ENCODE measurements at regions of chr2 and their contacts with region 1.

Region 1: DNA sequence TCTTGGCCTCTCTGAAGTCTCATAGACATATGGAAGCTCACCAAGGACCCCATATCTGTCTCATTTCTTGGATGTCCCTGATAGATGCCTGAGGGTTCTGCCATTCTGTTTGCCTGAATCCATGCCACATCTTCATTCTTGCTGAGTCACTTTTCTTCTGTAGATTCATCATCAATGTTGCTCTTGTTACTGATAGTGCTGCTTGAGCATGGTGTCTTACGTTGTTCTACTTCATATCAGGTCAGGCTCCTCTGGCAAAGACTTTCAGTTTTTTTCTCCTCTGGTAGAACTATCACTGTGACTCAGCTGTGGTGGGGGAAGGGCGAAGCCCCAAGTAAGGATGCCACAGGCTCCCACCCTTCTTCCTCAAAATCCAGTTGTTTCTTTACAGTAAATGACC is 885.2 kb downstream of the DCDC2C start:
- DNase-seq: no peak
- ATAC-seq: no peak
- H3K4me3 ChIP-seq: no peak overlapping the region
- H3K27ac ChIP-seq: no peak overlapping the region
- H3K4me1 ChIP-seq: no peaks in the 10 kb centered on the region
- H3K27me3 ChIP-seq: no peaks in the 10 kb centered on the region
- CTCF ChIP-seq: no peak
- POLR2A ChIP-seq: no peak
- RAD21 ChIP-seq: no peak

Region 2: DNA sequence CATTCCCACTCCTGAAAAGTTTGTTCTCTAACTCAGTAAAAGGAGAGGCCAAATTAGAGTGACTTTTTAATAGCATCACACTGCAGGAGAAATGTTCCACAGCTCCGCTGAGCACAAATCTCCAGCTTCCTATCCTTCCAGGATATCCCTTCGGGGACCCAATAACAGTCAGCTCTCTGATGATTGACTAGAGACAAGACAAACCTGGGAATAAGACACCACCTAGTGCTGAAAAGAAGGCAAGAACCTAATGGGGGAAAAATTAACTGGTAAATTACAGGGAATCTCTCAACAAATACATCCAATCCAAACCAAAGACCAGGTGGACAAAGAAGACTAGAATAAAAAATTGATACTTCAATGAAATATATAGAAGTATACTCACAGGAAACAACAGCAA is 126.5 kb after region 1 on chr2:
- CTCF ChIA-PET with region 1: no interaction called
- POLR2A ChIA-PET with region 1: no interaction called
- dilution Hi-C with region 1: no loop called
- in situ Hi-C with region 1: no loop called
- intact Hi-C with region 1: loop called (anchors 5 kb)
- DNase-seq: no peak
- ATAC-seq: no peak
- H3K4me3 ChIP-seq: no peak overlapping the region
- H3K27ac ChIP-seq: no peak overlapping the region
- H3K4me1 ChIP-seq: no peaks in the 10 kb centered on the region
- H3K27me3 ChIP-seq: no peaks in the 10 kb centered on the region
- CTCF ChIP-seq: no peak
- POLR2A ChIP-seq: no peak
- RAD21 ChIP-seq: no peak

Region 3: DNA sequence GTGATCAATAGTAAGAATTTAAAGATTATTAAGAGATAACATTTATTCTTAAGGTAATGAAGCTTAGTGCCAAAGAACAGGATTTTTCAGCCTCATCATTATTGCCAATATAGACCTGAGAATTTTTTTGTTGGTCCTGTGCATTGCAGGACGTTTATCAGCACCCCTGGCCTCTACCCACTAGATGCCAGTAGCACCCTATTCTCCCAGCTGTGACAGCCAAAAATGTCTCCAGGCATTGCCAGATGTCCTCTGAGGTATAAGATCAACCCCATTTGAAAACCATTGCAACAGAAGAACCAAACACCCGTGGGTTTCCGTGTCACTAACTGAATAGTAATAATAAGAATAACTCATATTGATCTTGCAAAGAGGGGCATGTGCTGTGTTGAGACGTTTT is 403.6 kb after region 1 on chr2:
- CTCF ChIA-PET with region 1: no interaction called
- POLR2A ChIA-PET with region 1: no interaction called
- dilution Hi-C with region 1: no loop called
- in situ Hi-C with region 1: no loop called
- intact Hi-C with region 1: no loop called
- DNase-seq: no peak
- ATAC-seq: no peak
- H3K4me3 ChIP-seq: no peak overlapping the region
- H3K27ac ChIP-seq: no peak overlapping the region
- H3K4me1 ChIP-seq: no peaks in the 10 kb centered on the region
- H3K27me3 ChIP-seq: no peaks in the 10 kb centered on the region
- CTCF ChIP-seq: no peak
- POLR2A ChIP-seq: no peak
- RAD21 ChIP-seq: no peak

Measured in IMR-90 (cell line).